IMR-90 (cell line): ENCODE measurements at regions of chr15 and their contacts with region 1.

Region 1: GRCh38 chr15:62173215-62173614 is 8.1 kb upstream of the C2CD4B start:
- DNase-seq: no peak
- ATAC-seq: no peak
- H3K4me3 ChIP-seq: no peak overlapping the region
- H3K27ac ChIP-seq: no peak overlapping the region
- H3K4me1 ChIP-seq: no peaks in the 10 kb centered on the region
- H3K27me3 ChIP-seq: peaks cover 27% of the 10 kb centered on the region
- CTCF ChIP-seq: no peak
- POLR2A ChIP-seq: no peak
- RAD21 ChIP-seq: no peak

Region 2: DNA sequence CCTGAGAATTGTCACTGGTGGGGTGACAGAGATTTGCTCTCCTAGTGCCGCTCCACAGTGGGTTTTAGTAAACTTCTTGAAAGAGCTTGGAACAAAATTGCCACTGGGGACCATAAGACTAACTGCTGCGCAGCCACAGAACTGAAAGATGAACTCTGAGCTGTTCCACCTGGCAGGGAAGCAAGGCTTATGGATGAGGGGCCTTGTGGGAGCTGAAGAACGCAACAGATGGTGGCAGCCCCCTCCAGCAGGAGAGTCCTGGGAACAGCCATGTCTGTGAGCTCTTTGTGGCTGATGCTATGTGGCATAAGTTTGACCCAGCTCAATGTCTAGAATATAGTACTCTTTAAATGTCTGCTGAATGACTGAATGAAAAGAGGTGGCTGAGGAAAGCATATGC is 58.6 kb after region 1 on chr15:
- CTCF ChIA-PET with region 1: no interaction called
- POLR2A ChIA-PET with region 1: no interaction called
- dilution Hi-C with region 1: no loop called
- in situ Hi-C with region 1: no loop called
- intact Hi-C with region 1: loop called (anchors 10 kb)
- DNase-seq: no peak
- ATAC-seq: no peak
- H3K4me3 ChIP-seq: no peak overlapping the region
- H3K27ac ChIP-seq: no peak overlapping the region
- H3K4me1 ChIP-seq: no peaks in the 10 kb centered on the region
- H3K27me3 ChIP-seq: peaks cover 12% of the 10 kb centered on the region
- CTCF ChIP-seq: no peak
- POLR2A ChIP-seq: no peak
- RAD21 ChIP-seq: no peak

Region 3: DNA sequence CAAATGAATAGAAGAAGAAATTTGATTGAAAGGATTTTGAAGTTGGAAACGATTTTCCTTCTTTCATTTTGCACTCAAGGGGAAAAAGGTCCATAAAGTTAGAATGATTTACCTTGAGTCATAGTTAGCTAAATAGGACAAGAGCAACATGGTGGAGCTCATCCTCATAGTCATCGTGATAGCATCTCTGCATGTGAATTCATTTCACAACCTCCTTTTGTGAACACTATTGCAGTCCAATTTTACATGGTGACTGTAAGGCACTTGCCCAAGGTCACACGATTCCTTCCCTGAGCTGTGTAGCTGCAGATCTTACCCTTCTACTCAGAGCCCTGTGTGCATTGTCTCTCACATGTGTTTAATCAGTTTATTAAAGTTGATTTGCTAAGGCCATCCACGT is 351.6 kb after region 1 on chr15:
- CTCF ChIA-PET with region 1: no interaction called
- POLR2A ChIA-PET with region 1: no interaction called
- dilution Hi-C with region 1: no loop called
- in situ Hi-C with region 1: no loop called
- intact Hi-C with region 1: no loop called
- DNase-seq: peak; percentile 68
- ATAC-seq: no peak
- H3K4me3 ChIP-seq: no peak overlapping the region
- H3K27ac ChIP-seq: no peak overlapping the region
- H3K4me1 ChIP-seq: peaks cover 17% of the 10 kb centered on the region
- H3K27me3 ChIP-seq: no peaks in the 10 kb centered on the region
- CTCF ChIP-seq: no peak
- POLR2A ChIP-seq: no peak
- RAD21 ChIP-seq: no peak